GM10248 (cell line): ENCODE measurements at regions of chr19 and their contacts with region 1.

Region 1: DNA sequence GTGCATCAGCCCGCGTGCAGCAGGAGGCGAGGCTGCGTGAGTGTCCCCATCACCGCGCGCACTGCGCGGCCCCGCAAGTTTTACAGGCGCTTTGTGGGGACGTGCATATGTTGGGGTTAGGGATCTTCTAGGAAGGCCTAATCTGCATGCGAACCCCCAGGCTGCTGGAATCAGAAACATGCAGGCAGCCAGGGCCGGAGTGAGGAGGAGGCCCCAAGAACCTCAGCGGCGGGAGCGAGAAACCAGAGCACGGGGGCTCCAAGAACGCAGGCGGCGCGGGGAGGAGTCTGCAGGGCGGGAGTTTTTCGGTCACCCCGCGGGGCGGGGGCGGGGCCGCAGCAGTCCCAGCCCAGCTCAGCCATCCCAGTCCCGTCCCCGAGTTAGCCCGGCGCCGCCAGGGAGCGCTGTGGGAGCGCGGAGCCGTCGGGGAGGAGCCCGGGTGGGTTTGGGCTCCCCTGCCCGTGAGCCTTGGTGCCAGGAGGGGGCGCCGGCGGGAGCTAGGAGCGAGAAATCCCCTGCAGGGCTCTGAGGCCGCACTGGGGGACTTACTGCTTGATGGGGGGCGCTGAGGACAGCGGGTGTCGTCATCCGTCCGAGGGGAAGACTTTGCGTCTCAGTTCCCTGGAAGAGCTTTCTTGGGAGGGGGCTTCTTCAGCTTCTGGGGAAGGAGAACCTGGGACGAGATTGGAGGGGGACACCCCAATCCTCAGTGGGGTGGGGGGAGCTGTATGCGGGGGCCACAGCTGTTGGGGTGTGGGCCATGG is 933 bp upstream of the NRTN start:
- DNase-seq: peak; percentile 96
- CTCF ChIP-seq: peak; percentile 98

Region 2: DNA sequence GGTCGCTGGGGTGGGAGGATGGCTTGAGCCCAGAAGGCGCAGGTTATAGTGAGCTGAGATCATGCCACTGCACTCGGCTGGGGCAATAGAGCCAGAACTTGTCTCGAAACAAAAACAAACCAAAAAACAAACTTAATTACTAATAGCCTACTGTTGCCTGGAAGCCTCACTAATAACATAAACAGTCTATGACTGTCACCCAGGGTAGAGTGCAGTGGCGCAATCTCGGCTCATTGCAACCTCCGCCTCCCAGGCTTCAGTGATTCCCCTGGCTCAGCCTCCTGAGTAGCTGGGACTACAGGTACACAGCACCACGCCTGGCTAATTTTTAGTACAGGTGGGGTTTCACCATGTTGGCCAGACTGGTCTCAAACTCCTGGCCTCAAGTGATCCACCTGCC is 65.5 kb before region 1 on chr19:
- CTCF ChIA-PET with region 1: no interaction called
- POLR2A ChIA-PET with region 1: no interaction called
- DNase-seq: no peak
- CTCF ChIP-seq: no peak

Region 3: GRCh38 chr19:5790573-5791520 is 13.1 kb before region 1 on chr19 and contains the start of gene DUS3L:
- CTCF ChIA-PET with region 1: interaction called, 75 read pairs
- POLR2A ChIA-PET with region 1: interaction called, 3 read pairs
- DNase-seq: peak; percentile 98
- CTCF ChIP-seq: no peak

Region 4: GRCh38 chr19:5814852-5815246 is 10.9 kb after region 1 on chr19:
- CTCF ChIA-PET with region 1: interaction called, 12 read pairs
- POLR2A ChIA-PET with region 1: no interaction called
- DNase-seq: no peak
- CTCF ChIP-seq: no peak

Region 5: GRCh38 chr19:5827891-5828660 is 24.1 kb after region 1 on chr19:
- CTCF ChIA-PET with region 1: interaction called, 70 read pairs
- POLR2A ChIA-PET with region 1: interaction called, 14 read pairs
- DNase-seq: peak; percentile 98
- CTCF ChIP-seq: no peak

Region 6: GRCh38 chr19:5891938-5892771 is 88.2 kb after region 1 on chr19:
- CTCF ChIA-PET with region 1: interaction called, 24 read pairs
- POLR2A ChIA-PET with region 1: no interaction called
- DNase-seq: no peak
- CTCF ChIP-seq: peak; percentile 53

Region 7: DNA sequence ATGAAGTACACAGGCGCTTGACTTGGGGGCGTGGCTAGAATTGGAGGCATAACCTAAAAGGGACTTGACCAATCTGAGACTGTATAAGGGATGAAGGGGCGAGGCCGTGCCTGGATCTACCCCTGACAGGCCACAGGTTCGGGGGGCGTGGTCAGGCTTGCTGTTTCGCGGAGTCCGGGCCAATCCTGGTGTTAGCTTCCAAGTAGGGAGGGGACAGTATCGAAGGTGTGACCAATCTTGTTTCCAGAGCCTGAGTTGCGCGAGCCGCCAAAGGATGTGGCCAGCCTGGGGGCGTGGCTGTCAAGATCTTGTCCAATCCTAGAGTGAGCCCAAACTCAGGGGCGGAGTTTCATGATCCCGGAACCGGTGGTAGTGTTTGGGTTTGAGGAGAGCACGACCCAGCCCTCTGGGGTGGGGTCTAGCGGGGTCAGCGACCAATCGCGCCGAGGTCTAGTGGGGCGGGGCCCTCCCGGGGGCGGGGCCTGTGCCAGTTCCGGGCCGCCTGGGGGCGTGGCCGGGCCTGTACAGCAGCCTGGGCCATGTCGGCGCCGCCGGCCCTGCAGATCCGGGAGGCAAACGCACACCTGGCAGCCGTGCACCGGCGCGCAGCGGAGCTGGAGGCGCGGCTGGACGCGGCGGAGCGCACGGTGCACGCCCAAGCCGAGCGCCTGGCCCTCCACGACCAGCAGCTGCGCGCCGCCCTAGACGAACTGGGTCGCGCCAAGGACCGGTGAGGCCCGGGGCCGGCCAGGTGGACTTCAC is 100.6 kb after region 1 on chr19 and contains the start of gene VMAC:
- CTCF ChIA-PET with region 1: interaction called, 19 read pairs
- POLR2A ChIA-PET with region 1: no interaction called
- DNase-seq: peak; percentile 99
- CTCF ChIP-seq: no peak

Region 8: DNA sequence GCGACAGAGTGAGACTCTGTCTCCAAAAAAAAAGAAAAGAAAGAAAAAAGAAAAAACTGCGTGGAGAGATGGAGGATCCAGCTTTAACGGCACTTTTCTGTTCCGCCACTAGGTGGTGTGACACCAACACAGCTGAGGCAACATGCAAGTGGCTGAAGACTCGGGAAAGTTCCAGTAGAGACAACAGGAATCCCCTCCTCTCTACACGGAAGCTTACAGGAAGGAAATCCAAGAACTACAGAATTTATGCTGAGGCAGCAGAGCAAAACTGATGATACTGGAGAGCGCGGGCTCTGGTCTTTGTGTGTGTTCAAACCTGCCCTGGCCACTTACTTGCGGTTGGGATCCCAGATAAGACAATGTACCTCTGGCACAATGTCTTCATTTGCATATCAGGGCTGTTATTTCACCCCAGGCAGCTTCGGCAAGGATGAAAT is 164.1 kb after region 1 on chr19:
- CTCF ChIA-PET with region 1: interaction called, 10 read pairs
- POLR2A ChIA-PET with region 1: no interaction called
- DNase-seq: peak; percentile 77
- CTCF ChIP-seq: peak; percentile 90